Right ventricle myocardium inferior (tissue), 1 donor: ENCODE measurements at regions of chr5 and their contacts with region 1.

Region 1: GRCh38 chr5:152271420-152271819 is 133.7 kb downstream of the NMUR2 start:
- DNase-seq: no peak
- ATAC-seq: peak; percentile 76

Region 2: DNA sequence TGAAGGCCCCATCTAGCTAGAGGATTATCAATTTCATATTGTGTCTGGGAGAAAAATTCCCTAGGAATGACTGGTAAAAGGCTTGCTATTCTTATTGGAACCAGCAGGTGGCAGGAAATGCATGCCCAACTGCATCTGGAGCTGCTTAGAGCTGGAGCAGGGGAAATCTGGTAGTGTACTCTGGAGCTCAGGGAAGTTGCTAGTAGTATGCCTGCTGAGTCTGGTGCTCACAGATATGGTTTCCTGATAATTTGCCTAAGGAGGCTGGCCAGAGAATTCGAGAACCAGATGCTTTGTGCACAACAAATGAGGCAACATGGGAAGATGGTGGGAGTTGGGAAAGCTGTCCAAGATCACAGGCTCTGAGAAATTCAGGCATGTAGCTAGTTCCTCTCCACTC is 446.0 kb before region 1 on chr5:
- intact Hi-C with region 1: loop called (anchors 2 kb)
- DNase-seq: no peak
- ATAC-seq: peak; percentile 92

Region 3: DNA sequence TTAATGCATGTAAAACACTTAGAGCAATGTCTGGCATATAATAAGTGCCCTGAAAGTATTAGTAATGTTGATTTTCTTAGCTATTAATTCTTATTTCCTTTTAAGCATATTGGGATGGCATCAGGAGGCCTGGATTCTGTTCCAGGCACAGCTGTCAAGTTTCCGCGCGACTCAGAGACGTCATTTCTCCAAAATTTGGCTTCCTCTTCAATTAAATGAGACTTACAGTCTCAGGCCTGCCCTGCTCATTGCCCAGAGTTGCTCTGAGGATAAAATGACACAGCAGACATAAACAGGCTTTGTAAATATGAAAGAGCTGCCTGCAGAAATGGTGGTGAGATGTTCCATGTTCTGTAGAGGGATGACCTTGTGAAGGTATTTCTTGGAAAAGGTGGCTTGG is 186.9 kb before region 1 on chr5:
- intact Hi-C with region 1: no loop called
- DNase-seq: no peak
- ATAC-seq: no peak

Region 4: GRCh38 chr5:152142840-152143469 is 128.5 kb before region 1 on chr5:
- intact Hi-C with region 1: loop called (anchors 2 kb)
- DNase-seq: peak; percentile 72
- ATAC-seq: peak; percentile 70

Region 5: DNA sequence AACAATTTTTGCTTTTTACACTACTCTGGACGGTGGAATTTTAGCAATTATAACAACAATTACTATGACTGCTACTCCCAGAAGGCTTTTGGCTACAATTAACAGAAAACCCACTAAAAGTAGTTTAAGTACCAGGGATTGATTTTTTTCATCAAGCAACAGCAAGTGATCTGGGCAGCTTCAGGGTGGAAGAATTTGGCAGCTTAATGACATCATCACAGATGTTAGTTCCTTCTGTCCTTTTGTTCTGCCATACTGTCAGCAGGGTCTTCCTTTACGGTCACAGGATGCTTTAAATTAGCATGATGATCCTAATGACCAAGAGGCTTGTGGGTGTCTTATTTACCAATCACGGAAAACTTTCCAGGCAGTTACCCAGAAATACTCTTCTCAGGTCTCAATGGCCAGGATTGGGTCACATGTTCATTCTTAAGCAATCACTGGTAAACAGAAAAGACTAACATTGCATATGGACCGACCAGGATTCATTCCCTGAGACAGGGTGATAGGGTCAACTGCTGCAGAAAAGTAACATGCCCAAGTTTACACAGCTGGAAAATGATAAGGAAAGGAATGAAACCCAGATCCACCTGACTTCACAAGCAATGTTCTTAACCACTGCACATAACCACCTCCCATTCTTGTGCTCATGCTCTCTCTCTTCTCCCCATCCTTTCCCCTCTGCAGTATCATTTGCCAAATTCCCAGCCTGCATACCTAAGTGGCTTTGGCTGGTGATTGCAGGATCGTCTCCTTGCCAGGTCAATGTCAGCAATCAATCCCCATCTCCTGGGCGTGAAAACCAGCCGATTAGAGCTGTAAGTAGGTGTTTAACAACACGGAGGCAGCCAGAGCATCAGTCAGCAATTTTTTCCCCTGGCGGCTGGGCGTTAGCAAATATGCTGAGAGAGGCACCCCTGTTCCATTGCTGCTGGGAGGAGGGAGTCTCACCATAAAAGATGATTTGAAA is 85.9 kb before region 1 on chr5:
- intact Hi-C with region 1: loop called (anchors 5 kb)
- DNase-seq: no peak
- ATAC-seq: peak; percentile 79

Region 6: GRCh38 chr5:152314196-152314829 is 42.9 kb after region 1 on chr5:
- intact Hi-C with region 1: no loop called
- DNase-seq: no peak
- ATAC-seq: no peak

Region 7: DNA sequence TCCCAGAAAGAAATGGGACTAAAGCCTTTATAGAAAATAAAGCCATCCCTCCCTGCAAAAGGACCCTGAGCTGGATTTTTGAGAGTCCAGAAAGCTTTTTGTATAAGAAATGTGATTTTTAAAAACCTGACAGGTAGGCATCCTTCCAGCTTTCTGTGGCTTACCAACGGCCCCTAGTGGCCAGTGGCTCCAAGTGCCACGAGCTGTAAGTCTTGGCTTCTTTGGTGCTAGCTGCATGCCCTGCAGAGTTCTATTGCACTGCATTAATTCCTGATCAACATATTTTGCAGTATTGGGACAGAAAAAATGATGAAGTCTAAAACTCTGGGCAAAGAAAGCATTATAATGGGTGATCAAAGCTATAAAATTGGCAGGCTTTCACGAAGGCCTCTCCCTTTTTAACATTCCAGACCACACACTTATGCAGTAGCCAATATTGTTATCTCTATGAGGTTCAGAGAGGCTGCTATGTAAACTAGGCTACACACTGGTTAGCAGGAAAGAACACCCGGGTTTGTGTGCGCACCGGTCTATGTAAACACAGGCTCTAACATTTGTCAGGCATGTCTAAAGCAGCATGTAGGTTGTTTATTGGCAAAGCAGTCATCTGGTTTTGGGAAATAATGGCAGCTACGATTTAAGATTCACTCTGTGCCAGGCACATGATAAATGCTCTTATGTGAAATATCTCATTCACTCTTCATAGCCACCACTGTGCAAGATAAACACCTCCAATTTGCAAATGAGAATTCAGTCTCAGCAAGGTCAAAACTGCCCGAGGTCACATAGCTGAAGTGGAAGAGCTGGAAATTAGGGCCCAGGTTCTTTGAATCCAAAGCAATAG is 78.5 kb after region 1 on chr5:
- intact Hi-C with region 1: loop called (anchors 5 kb)
- DNase-seq: no peak
- ATAC-seq: peak; percentile 75

Region 8: GRCh38 chr5:152505442-152506042 is 234.1 kb after region 1 on chr5:
- intact Hi-C with region 1: loop called (anchors 5 kb)
- DNase-seq: no peak
- ATAC-seq: peak; percentile 74